Tibial artery (tissue), 4 donors: ENCODE measurements at regions of chr5 and their contacts with region 1.

Region 1: GRCh38 chr5:11415751-11416150 is 488.5 kb downstream of the CTNND2 start:
- DNase-seq: no peak
- H3K4me3 ChIP-seq: no peak overlapping the region
- H3K27ac ChIP-seq: no peak overlapping the region
- H3K4me1 ChIP-seq: no peaks in the 10 kb centered on the region
- H3K27me3 ChIP-seq: no peaks in the 10 kb centered on the region
- CTCF ChIP-seq: no peak

Region 2: GRCh38 chr5:11584017-11584416 is 168.3 kb after region 1 on chr5:
- intact Hi-C with region 1: loop called (anchors 5 kb)
- DNase-seq: no peak
- H3K4me3 ChIP-seq: no peak overlapping the region
- H3K27ac ChIP-seq: no peak overlapping the region
- H3K4me1 ChIP-seq: no peaks in the 10 kb centered on the region
- H3K27me3 ChIP-seq: no peaks in the 10 kb centered on the region
- CTCF ChIP-seq: no peak